Left cardiac atrium (tissue), 4 donors: ENCODE measurements at regions of chr3 and their contacts with region 1.

Region 1: GRCh38 chr3:186121968-186122367 is 13.1 kb upstream of the ETV5 start:
- DNase-seq: no peak
- ATAC-seq: peak; percentile 49 to 50

Region 2: GRCh38 chr3:186002884-186003472 is 119.0 kb before region 1 on chr3:
- intact Hi-C with region 1: loop called in 1 of 2 experiments (anchors 5 kb)
- DNase-seq: no peak
- ATAC-seq: no peak